ENCODE measurements at regions of chr6 and their contacts with region 1.

Region 1: DNA sequence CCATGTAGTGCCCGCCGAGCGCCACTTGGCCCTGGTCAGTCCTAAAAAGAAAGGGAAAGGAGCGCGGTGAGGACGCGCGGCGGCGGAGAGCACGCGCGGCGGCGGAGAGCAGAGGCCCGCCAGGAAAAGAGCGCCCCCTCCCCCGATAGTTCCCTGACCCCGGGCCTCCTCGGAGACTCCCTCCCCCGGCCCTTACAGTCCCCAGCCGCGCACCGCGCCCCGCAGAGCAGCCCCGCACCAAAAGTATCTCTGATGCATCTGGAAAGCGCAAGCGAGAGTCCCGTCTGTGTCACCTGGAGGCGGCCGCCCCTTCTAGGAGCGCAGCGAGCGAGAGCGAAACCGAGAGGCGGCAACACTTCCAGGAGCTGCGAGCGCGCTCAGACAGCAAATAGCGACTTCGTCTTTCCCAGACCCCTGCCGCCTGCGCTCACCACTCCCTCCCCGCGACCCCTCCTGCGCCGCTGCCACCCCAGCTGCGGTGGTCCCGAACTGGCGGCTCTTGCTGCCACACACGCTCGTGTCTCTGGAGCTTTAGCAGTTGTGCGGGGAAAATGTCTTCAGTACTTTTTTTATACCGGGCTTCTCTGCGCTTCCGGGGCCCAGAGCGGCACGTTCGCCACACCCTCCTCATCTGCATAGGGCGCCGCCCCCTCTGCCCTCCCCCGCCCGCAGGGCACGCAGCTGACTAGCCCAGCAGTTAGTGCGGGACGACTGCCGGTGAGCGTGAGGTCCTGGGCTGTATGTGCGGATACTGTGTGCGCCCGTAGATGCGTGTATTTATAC is at the start of gene TENT5A:
- DNase-seq: peak; percentile 89
- H3K4me3 Mint-ChIP-seq: peak within 1 kb of the TSS; percentile 88
- H3K27ac Mint-ChIP-seq: peak within 1 kb of the TSS; percentile 77
- H3K4me1 Mint-ChIP-seq: peaks cover 28% of the 10 kb centered on the region
- H3K27me3 Mint-ChIP-seq: peaks cover 12% of the 10 kb centered on the region
- total RNA-seq, gene TENT5A: 0.72 to 1.0 TPM

Region 2: DNA sequence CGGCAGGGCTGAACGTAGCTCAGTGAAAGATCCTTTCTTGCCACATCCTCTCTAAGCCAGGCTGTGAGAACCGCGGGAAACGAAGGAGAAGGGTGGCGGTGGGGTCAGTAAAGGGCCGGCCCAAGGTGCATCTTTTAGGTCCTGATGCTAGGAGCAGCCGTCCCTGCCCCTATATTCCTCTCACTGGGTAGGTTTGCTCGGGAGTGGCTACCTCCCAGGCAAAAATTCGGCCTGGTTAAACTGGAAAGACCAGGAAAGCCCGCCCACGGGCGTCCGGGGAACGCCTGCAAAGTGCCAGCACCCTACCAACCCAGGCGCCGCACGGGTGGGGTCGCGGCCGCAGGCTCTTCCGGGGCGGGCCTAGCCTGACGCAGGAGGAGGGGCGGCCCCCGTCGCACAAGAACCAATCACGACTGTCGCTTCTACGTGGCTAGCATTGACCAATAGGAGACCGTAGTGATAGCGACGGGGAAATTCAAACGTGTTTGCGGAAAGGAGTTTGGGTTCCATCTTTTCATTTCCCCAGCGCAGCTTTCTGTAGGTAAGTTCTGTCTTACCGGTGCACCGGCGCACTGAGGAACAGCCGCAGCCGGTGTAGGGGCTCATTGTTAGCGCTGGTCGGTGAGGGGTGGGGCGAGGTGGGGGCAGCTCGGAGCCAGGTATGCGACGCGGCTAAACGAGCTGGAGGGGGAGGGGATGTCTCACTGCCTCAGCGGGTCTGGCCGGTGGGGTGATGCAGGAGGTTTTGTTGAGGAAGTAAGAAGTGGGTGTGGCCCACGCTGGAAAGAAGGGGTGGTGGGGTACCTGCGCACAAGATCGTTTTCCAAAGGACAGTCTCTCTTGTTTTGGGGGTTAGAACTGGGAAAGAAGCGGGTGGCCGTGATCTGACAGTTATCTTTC is 1747.9 kb before region 1 on chr6 and contains the start of gene TTK:
- CTCF ChIA-PET with region 1: interaction called, 3 read pairs
- intact Hi-C with region 1: loop called (anchors 1 kb)
- DNase-seq: peak; percentile 93
- H3K4me3 Mint-ChIP-seq: peak within 1 kb of the TSS; percentile 95
- H3K27ac Mint-ChIP-seq: peak within 1 kb of the TSS; percentile 89
- H3K4me1 Mint-ChIP-seq: peaks cover 16% of the 10 kb centered on the region
- H3K27me3 Mint-ChIP-seq: peaks cover 1% of the 10 kb centered on the region
- total RNA-seq, gene TTK: 45.9 to 51.1 TPM

Region 3: GRCh38 chr6:80163658-80164187 is 1588.6 kb before region 1 on chr6:
- CTCF ChIA-PET with region 1: no interaction called
- intact Hi-C with region 1: loop called (anchors 1 kb)
- DNase-seq: peak; percentile 18
- H3K4me3 Mint-ChIP-seq: no peak overlapping the region
- H3K27ac Mint-ChIP-seq: no peak overlapping the region
- H3K4me1 Mint-ChIP-seq: no peaks in the 10 kb centered on the region
- H3K27me3 Mint-ChIP-seq: no peaks in the 10 kb centered on the region

Region 4: GRCh38 chr6:80605165-80605989 is 1147.0 kb before region 1 on chr6:
- CTCF ChIA-PET with region 1: interaction called, 3 read pairs
- intact Hi-C with region 1: loop called (anchors 1 kb)
- DNase-seq: no peak
- H3K4me3 Mint-ChIP-seq: no peak overlapping the region
- H3K27ac Mint-ChIP-seq: no peak overlapping the region
- H3K4me1 Mint-ChIP-seq: no peaks in the 10 kb centered on the region
- H3K27me3 Mint-ChIP-seq: peaks cover 14% of the 10 kb centered on the region

Region 5: DNA sequence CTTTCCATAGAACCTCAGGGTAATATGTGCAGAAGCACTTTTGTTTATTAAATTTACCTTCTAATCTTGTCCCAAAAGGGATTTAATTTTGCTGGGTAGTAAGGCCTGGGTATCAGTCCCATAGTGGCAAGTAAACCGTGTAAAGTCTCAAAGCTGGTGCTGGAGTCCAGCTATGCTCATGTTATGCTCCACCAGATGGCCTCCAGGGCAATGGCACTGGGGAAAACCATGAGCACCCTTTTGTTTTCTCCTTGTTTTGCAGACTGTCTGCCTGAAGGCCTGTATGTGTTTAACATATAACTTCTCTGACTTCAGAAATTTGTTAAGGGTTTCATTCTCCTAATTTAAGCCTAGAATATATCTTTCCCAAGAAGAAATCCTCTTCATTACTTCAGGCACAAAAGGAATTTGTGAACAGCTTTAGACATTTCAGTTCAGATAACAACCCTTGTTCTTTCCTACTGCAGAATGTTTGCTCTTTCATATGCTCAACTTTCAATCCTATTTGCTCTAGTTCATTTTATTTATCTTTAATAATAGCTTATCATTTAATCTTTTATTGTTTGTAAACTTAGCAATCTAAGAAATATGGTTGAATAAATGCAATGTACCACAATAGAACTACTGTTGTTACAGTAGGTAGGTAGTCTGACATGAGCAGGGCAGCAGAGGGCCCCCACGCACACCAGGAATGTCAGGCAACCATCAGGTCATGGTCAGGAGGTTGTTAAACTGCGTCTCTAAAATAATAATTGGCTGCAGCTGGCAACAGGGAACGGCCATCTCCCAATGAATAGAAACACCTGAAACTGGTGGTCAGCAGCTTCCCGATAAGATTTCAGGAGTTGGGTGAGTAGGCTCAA is 162.6 kb before region 1 on chr6:
- CTCF ChIA-PET with region 1: no interaction called
- intact Hi-C with region 1: loop called (anchors 5 kb)
- DNase-seq: no peak
- H3K4me3 Mint-ChIP-seq: no peak overlapping the region
- H3K27ac Mint-ChIP-seq: no peak overlapping the region
- H3K4me1 Mint-ChIP-seq: no peaks in the 10 kb centered on the region
- H3K27me3 Mint-ChIP-seq: no peaks in the 10 kb centered on the region

Region 6: DNA sequence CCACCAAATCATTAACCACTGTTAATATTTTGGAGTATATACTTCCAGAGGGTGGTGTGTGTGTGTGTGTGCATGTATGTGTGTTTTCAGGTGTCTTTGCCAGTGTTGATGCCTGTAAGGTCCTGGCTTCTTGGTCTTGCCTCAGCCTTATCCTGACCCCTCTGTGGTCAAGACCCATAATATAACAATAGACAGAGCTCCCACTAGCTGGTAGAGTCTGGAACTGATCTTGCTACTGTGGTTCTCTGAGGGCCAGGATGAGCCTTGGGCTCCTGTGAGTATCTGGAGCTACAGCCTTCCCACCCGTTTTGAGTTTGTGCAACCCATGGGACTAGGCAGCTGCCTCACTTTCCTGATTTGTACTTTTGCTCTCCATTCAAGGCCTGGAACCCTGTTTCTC is 304.2 kb after region 1 on chr6:
- CTCF ChIA-PET with region 1: no interaction called
- intact Hi-C with region 1: no loop called
- DNase-seq: no peak
- H3K4me3 Mint-ChIP-seq: no peak overlapping the region
- H3K27ac Mint-ChIP-seq: no peak overlapping the region
- H3K4me1 Mint-ChIP-seq: no peaks in the 10 kb centered on the region
- H3K27me3 Mint-ChIP-seq: peaks cover 4% of the 10 kb centered on the region

Region 7: GRCh38 chr6:83192871-83193746 is 1440.8 kb after region 1 on chr6 and contains the starts of genes PGM3 and RWDD2A:
- CTCF ChIA-PET with region 1: no interaction called
- intact Hi-C with region 1: loop called (anchors 1 kb)
- DNase-seq: peak; percentile 91
- H3K4me3 Mint-ChIP-seq: peak within 1 kb of the TSS; percentile 96
- H3K27ac Mint-ChIP-seq: peak within 1 kb of the TSS; percentile 89
- H3K4me1 Mint-ChIP-seq: peaks cover 38% of the 10 kb centered on the region
- H3K27me3 Mint-ChIP-seq: peaks cover 2% of the 10 kb centered on the region
- total RNA-seq, gene PGM3: 17.0 to 19.8 TPM
- total RNA-seq, gene RWDD2A: 1.4 TPM